ENCODE measurements at regions of chr13 and their contacts with region 1.

Region 1: DNA sequence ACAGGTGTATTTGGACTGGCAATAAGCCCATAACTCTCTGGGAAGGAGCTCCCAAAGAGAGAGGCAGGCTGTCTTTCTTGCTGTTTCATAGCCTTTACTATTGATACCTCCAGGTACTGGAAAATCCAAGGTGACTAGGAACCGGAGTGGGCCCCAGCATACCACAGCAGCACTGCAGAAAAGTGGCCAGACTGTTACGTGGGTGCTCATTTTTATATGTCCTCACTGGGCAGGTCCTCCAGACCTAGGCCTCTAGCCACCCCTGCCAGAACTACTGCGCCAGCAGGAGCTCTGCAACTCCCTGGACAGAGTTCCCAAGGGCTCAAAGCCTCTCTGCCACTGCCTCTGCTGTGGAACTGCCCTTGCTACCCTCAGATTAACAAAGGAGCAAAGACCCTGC is 46.4 kb downstream of the LIG4 start:
- DNase-seq: no peak
- ATAC-seq: no peak
- H3K4me3 Mint-ChIP-seq: no peak overlapping the region
- H3K27ac Mint-ChIP-seq: no peak overlapping the region
- H3K4me1 Mint-ChIP-seq: no peaks in the 10 kb centered on the region
- H3K27me3 Mint-ChIP-seq: peaks cover 8% of the 10 kb centered on the region

Region 2: GRCh38 chr13:108155185-108156106 is 13.5 kb before region 1 on chr13:
- CTCF ChIA-PET with region 1: interaction called, 10 read pairs
- POLR2A ChIA-PET with region 1: no interaction called
- DNase-seq: peak; percentile 60
- ATAC-seq: no peak
- H3K4me3 Mint-ChIP-seq: no peak overlapping the region
- H3K27ac Mint-ChIP-seq: no peak overlapping the region
- H3K4me1 Mint-ChIP-seq: no peaks in the 10 kb centered on the region
- H3K27me3 Mint-ChIP-seq: peaks cover 3% of the 10 kb centered on the region

Region 3: GRCh38 chr13:108980237-108980636 is 811.3 kb after region 1 on chr13:
- CTCF ChIA-PET with region 1: no interaction called
- POLR2A ChIA-PET with region 1: no interaction called
- DNase-seq: no peak
- ATAC-seq: no peak
- H3K4me3 Mint-ChIP-seq: no peak overlapping the region
- H3K27ac Mint-ChIP-seq: no peak overlapping the region
- H3K4me1 Mint-ChIP-seq: no peaks in the 10 kb centered on the region
- H3K27me3 Mint-ChIP-seq: peaks cover 3% of the 10 kb centered on the region

Measured in activated CD8-positive, alpha-beta T cell treated with anti-CD3 and anti-CD28 coated beads, Interleukin-2, amount 10 ng/mL, durations not matched to agents 7 days and 5 days (primary cell).